Aorta (tissue), 5 donors: ENCODE measurements at regions of chr22 and their contacts with region 1.

Region 1: DNA sequence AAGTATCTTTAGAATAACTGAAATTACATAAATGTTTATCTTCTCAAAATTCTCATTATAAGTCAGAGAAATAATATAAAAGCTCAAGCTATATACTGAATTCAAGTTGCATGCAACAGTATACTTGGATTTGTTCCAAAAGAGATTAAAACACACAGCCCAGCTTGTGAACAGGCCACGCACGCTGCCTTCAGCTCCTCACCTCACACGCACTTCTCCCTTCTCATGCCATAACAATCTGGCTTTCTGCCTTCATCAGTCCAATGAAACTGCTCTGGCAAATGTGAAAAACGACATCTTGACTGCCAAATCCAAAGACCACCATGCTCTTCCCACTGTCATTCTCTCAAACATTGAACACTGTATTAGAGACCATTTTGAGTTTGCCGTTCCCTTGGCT is 22.1 kb downstream of the ATP6V1E1 start:
- DNase-seq: no peak
- ATAC-seq: no peak
- H3K4me3 ChIP-seq: no peak overlapping the region
- H3K27ac ChIP-seq: no peak overlapping the region
- H3K4me1 ChIP-seq: no peaks in the 10 kb centered on the region
- H3K27me3 ChIP-seq: no peaks in the 10 kb centered on the region

Region 2: GRCh38 chr22:17540481-17540880 is 66.0 kb before region 1 on chr22:
- intact Hi-C with region 1: loop called in 1 of 2 experiments (anchors 10 kb)
- DNase-seq: no peak
- ATAC-seq: no peak
- H3K4me3 ChIP-seq: no peak overlapping the region
- H3K27ac ChIP-seq: no peak overlapping the region
- H3K4me1 ChIP-seq: no peaks in the 10 kb centered on the region
- H3K27me3 ChIP-seq: no peaks in the 10 kb centered on the region

Region 3: GRCh38 chr22:17554814-17555213 is 51.7 kb before region 1 on chr22:
- intact Hi-C with region 1: no loop called
- DNase-seq: no peak
- ATAC-seq: no peak
- H3K4me3 ChIP-seq: no peak overlapping the region
- H3K27ac ChIP-seq: no peak overlapping the region
- H3K4me1 ChIP-seq: no peaks in the 10 kb centered on the region
- H3K27me3 ChIP-seq: no peaks in the 10 kb centered on the region

Region 4: GRCh38 chr22:17726464-17727246 is 120.2 kb after region 1 on chr22:
- intact Hi-C with region 1: no loop called
- DNase-seq: no peak
- ATAC-seq: no peak
- H3K4me3 ChIP-seq: no peak overlapping the region
- H3K27ac ChIP-seq: peak overlapping the region in 1 of 2 donors; percentile 96
- H3K4me1 ChIP-seq: peaks cover 0 to 2% of the 10 kb centered on the region in 2 donors
- H3K27me3 ChIP-seq: no peaks in the 10 kb centered on the region